Adrenal gland (tissue), 19 donors: ENCODE measurements at regions of chr7 and their contacts with region 1.

Region 1: DNA sequence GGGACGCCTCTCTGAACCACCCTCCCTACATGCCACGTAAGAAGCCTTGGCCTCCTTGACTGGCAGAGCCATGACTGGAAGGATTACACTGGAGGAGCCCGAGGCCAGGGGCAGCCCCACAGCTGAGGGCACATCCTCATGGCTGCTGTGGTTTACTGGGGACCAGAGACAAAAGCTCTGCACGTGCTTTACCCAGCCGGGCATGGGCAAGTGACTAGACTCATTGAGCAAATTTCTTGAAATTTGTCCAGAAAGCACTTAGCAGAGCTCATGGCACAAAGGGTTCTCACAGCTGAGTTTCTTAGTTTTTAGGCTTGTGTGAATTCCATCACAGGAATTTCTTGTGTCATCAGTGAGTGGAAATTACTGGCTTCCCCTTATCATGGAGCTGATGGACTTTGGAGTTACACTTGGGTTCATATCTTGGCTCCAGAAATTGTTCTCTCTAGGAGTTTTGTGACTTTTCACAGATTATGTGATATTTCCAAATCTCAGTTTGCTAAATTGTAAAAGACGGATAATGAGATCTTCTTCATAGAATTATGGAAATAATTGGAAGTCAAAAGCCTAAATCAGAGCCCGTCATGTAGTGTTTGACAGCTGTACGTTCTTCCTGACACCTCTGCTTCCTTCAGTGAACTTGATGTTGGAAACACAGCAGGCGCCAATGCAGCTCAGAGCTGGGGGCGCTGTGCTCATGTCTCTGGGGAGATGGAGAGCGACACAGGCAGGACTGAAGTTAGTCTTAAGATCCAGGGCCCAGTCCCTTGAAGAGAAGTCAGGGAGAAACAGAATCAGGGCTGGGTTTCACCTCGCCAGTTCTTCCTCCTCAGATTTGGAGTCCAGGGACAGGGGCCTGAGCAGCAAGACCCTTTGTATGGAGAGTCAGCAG is 47.7 kb upstream of the MGAM2 start:
- DNase-seq: no peak
- H3K4me3 ChIP-seq: no peak overlapping the region
- H3K27ac ChIP-seq: no peak overlapping the region
- H3K4me1 ChIP-seq: no peaks in the 10 kb centered on the region
- H3K27me3 ChIP-seq: no peaks in the 10 kb centered on the region
- CTCF ChIP-seq: no peak
- POLR2A ChIP-seq: no peak

Region 2: DNA sequence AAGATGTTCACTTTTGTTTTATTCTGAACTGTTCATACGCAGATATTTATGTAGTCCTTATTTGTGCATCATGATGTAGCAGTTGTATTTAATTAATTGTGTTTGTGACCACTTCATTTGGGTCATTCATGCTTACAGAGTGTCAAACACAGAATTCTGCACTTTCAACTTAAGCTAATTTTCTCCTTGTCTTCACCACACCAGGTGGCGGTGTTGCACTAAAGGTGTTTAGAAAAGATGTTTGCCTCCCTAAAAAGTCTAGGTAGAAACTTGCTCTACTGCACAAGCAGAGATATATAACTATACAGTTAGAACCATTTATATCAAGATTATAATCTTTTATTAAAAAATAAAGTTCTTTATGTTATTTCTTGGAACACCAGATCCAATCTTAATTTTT is 89.0 kb before region 1 on chr7:
- intact Hi-C with region 1: no loop called
- DNase-seq: no peak
- H3K4me3 ChIP-seq: no peak overlapping the region
- H3K27ac ChIP-seq: no peak overlapping the region
- H3K4me1 ChIP-seq: no peaks in the 10 kb centered on the region
- H3K27me3 ChIP-seq: no peaks in the 10 kb centered on the region
- CTCF ChIP-seq: no peak
- POLR2A ChIP-seq: no peak

Region 3: DNA sequence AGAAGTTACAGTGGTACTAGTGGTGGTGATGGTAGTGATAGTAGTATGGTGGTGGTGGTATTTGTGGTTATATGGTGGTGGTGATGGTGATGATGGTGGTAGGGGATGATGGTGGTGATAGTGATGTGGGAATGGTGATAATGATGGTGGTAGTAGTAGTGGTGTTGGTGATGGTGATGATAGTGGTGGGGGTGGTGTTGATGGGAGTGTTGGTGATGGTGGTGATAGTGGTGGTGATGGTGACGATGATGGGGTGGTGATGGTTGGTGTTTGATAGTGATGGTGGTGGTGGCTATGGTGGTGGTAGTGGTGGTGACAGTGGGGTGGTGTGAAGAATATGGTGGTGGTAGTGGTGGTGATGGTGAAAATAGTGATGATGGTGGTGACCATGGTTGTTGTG is 19.8 kb after region 1 on chr7:
- intact Hi-C with region 1: loop called in 1 of 2 experiments (anchors 2 kb)
- DNase-seq: no peak
- H3K4me3 ChIP-seq: no peak overlapping the region
- H3K27ac ChIP-seq: no peak overlapping the region
- H3K4me1 ChIP-seq: no peaks in the 10 kb centered on the region
- H3K27me3 ChIP-seq: no peaks in the 10 kb centered on the region
- CTCF ChIP-seq: no peak
- POLR2A ChIP-seq: no peak

Region 4: DNA sequence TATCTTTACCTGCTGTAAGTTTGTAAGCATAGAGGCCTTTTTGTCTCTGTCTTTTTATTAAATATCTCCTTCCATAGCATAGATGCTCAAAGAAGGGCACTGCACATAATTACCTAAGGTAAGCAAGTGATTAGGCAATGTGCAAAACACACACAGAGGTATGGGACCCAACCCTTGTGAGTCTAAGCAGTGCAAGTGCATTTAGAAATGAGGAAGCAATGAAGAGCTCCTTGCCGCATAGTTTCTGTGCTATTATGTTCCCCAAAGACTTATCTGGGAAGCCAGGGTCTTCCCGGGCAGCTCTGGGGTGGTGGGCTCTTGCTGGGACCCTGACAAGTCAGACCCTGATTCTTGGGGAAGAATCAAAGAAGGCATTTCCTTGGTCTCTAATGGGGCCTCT is 34.2 kb after region 1 on chr7:
- intact Hi-C with region 1: loop called in 1 of 2 experiments (anchors 5 kb)
- DNase-seq: no peak
- H3K4me3 ChIP-seq: no peak overlapping the region
- H3K27ac ChIP-seq: no peak overlapping the region
- H3K4me1 ChIP-seq: no peaks in the 10 kb centered on the region
- H3K27me3 ChIP-seq: no peaks in the 10 kb centered on the region
- CTCF ChIP-seq: no peak
- POLR2A ChIP-seq: no peak

Region 5: DNA sequence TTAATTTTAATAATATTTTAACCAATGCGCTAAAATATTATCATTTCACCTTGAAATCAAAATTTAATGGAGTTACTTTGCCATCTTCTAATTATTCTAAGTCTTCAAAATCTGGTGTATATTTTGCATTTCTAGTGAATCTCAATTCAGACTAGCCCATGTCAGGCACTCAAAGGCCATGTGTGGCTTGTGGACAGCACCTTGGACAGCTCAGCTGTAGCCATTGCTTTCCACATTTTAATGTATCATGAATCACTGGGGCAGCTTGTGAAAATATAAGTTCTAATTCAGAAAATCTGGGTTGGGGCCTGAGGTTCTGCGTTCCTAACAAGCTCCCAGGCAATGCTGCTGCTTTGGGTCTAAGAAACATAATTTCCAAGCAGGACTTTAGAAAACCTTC is 104.9 kb after region 1 on chr7:
- intact Hi-C with region 1: no loop called
- DNase-seq: no peak
- H3K4me3 ChIP-seq: no peak overlapping the region
- H3K27ac ChIP-seq: no peak overlapping the region
- H3K4me1 ChIP-seq: no peaks in the 10 kb centered on the region
- H3K27me3 ChIP-seq: no peaks in the 10 kb centered on the region
- CTCF ChIP-seq: no peak
- POLR2A ChIP-seq: no peak